ENCODE measurements at regions of chr3 and their contacts with region 1.

Region 1: DNA sequence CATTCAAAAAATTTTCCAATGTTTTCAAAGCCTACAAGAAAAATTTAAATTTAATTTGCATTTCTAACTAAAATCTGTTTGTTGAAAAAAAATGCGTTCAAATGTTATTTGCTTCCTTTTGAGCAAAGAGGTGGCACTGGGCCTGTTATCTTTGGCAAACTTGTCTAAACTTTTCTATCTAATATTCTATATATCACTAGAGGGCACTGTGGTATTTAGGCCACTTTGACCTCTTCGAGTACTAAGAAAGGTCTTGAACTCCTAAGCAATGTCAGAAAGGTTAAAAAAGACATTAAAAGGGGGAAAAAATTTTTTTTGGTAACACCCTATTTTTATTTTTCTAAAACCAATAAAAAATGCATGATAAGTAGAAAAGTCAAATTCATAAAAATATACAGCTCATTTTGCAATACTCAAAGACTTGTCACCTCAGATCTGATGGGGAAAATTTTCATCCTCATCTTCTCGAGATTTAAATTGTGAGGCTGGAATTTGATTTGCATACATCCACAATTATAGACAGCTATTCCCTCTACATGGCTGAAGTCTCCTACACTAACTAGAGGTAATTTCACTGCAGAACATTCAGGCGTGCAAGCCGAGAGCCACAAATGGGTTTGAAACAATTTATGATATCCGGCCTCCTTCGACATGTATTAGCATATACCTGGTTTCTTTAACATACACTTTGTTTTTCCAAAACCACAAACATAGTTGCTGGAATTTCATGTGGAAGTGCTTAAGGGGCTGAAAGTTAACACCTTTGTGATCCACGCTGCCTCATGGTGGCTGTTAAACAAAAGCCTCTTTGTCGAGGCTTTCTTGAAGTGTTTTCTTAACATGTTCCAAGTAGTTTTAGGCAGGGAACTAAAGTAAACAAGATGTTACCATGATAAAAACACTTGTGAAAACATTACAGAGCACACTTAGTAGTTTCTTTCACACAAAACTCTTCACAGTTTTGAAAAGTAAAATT is 576.4 kb downstream of the FOXP1 start:
- DNase-seq: peak; percentile 74
- H3K4me3 ChIP-seq: no peak overlapping the region
- H3K27ac ChIP-seq: no peak overlapping the region
- H3K4me1 ChIP-seq: peaks cover 64% of the 10 kb centered on the region
- CTCF ChIP-seq: peak; percentile 95

Region 2: DNA sequence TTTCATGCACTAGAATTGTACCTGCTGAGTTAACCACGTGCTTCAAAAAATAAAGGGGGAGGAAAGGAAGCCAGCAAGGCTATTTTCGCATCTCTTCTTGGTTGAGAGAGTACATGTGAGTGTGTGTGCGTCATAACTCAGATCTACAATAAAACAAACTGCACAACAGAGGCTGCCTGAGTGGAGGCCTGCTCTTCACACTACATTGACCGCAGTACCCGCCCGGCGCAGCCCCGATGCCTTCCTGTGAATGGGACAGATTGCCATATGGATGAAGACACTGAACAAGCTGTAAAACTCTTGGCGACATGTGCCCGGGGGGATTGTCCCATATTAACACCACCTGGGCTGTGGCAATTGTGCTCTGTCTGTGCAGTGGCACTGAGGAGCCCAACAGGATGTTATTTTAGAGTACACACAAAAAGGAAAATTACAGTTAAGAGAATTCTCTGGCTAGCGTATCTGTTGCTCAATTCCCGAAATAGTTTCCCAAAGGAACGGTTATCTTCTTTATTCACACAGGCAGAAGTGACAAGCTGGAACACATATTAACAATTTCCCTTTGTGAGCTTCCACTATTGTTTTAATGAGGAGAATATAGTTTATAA is 24.9 kb after region 1 on chr3:
- CTCF ChIA-PET with region 1: no interaction called
- POLR2A ChIA-PET with region 1: interaction called, 4 read pairs
- intact Hi-C with region 1: loop called (anchors 1 kb)
- DNase-seq: peak; percentile 86
- H3K4me3 ChIP-seq: peak overlapping the region; percentile 46
- H3K27ac ChIP-seq: peak overlapping the region; percentile 63
- H3K4me1 ChIP-seq: peaks cover 45% of the 10 kb centered on the region
- CTCF ChIP-seq: no peak

Region 3: DNA sequence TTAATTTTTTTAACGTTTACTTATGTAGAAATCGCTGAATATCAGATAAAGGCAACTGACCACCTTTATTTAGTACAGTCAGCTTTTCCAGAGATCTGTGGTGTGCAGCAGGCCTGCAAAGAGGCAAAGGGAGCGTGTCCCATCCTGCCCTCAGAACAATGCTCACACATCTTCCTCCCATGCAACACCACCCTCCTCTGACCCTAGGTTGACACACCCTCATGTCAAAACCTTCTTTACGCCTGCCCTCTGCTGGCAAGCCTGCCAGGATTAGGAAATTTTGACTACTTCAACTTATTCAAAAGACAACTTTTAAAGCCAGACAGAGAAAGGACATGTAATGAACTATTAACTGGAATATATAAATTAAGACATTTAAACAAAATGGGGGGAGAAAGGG is 62.7 kb after region 1 on chr3:
- CTCF ChIA-PET with region 1: interaction called, 4 read pairs
- POLR2A ChIA-PET with region 1: interaction called, 7 read pairs
- intact Hi-C with region 1: loop called (anchors 1 kb)
- DNase-seq: peak; percentile 76
- H3K4me3 ChIP-seq: no peak overlapping the region
- H3K27ac ChIP-seq: no peak overlapping the region
- H3K4me1 ChIP-seq: peaks cover 47% of the 10 kb centered on the region
- CTCF ChIP-seq: peak; percentile 88

Region 4: DNA sequence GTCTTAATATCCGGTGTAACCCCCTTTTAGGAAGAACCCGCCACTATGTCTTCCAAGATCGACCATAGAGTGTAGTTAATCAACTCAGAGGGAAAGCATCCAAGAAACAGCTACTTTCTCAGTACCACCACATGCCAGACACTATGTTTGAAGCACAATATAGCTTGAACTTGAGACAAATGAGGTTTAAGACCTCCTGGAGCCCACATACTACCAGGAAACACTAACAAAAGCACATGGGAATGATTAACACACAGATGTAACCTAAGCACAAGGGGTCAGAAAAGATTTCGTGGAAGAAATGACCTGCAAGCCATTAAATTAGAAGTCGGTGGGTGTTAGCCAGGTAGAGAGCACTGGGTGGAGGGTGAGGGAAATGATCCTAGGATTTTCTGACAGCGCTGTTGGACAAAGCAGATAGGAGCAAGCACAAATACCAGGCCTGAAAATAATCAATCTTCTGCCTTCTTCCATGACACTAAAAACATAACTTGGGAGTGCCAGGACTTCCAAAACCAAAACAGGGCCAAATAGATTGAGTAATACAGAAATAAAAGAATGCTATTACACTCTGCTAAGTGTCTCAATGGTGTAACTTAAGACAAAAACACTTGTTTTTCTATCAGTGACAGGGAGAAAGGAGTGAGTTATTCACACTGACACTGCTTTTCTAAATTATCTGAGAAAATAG is 362.7 kb after region 1 on chr3:
- CTCF ChIA-PET with region 1: no interaction called
- POLR2A ChIA-PET with region 1: no interaction called
- intact Hi-C with region 1: loop called (anchors 10 kb)
- DNase-seq: no peak
- H3K4me3 ChIP-seq: no peak overlapping the region
- H3K27ac ChIP-seq: no peak overlapping the region
- H3K4me1 ChIP-seq: peaks cover 24% of the 10 kb centered on the region
- CTCF ChIP-seq: no peak

Region 5: GRCh38 chr3:71652781-71653413 is 645.8 kb after region 1 on chr3:
- CTCF ChIA-PET with region 1: no interaction called
- POLR2A ChIA-PET with region 1: no interaction called
- intact Hi-C with region 1: loop called (anchors 2 kb)
- DNase-seq: peak; percentile 71
- H3K4me3 ChIP-seq: no peak overlapping the region
- H3K27ac ChIP-seq: no peak overlapping the region
- H3K4me1 ChIP-seq: peaks cover 18% of the 10 kb centered on the region
- CTCF ChIP-seq: peak; percentile 92

Measured in OCI-LY7 (cell line).